Calu3 (cell line): ENCODE measurements at regions of chr5 and their contacts with region 1.

Region 1: GRCh38 chr5:31021181-31021624 is 172.3 kb upstream of the CDH6 start:
- DNase-seq: no peak
- H3K4me3 Mint-ChIP-seq: no peak overlapping the region
- H3K27ac Mint-ChIP-seq: no peak overlapping the region
- H3K4me1 Mint-ChIP-seq: peaks cover 16% of the 10 kb centered on the region
- H3K27me3 Mint-ChIP-seq: no peaks in the 10 kb centered on the region
- CTCF ChIP-seq: no peak

Region 2: DNA sequence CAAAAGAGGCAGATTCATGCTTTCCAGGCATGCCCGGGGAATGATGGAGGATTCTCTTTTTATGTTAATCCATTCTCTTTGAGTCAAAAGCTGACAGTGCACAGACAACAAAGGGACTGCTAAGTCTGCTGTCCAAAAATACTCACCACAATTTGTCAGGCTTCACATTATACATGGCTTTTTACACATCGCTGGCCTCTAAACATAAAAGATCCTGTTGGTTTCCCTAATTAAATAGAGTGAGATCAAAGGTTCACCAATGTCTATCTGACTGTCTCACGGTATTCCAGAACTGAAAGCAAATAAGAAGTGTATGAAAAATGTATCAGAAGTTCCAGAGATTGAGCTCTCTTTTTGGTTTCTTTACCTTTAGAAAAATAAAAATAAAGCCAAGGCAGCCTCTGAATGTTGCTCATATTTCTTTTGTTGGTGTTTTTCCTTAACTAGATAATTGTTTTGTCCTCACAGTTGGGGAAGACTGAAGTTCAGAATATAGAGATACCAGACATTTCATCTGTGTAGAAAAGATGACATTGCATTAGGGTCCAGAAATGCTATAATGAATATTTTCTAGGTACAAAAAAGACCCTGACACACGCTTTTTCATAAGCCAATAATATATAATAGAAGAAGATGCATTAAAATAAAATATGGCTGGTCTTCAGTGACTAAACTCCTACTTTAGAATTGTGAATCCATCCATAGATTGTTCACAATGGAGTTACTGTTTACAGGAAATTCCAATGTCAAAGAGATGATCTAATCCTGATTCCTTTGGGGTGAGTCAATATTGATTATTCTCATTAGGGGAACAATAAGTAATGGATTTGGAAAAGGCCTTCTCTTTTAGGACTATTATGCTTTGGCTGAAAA is 516.0 kb before region 1 on chr5:
- CTCF ChIA-PET with region 1: no interaction called
- intact Hi-C with region 1: loop called (anchors 5 kb)
- DNase-seq: no peak
- H3K4me3 Mint-ChIP-seq: no peak overlapping the region
- H3K27ac Mint-ChIP-seq: peak overlapping the region; percentile 85
- H3K4me1 Mint-ChIP-seq: peaks cover 56% of the 10 kb centered on the region
- H3K27me3 Mint-ChIP-seq: no peaks in the 10 kb centered on the region
- CTCF ChIP-seq: no peak

Region 3: DNA sequence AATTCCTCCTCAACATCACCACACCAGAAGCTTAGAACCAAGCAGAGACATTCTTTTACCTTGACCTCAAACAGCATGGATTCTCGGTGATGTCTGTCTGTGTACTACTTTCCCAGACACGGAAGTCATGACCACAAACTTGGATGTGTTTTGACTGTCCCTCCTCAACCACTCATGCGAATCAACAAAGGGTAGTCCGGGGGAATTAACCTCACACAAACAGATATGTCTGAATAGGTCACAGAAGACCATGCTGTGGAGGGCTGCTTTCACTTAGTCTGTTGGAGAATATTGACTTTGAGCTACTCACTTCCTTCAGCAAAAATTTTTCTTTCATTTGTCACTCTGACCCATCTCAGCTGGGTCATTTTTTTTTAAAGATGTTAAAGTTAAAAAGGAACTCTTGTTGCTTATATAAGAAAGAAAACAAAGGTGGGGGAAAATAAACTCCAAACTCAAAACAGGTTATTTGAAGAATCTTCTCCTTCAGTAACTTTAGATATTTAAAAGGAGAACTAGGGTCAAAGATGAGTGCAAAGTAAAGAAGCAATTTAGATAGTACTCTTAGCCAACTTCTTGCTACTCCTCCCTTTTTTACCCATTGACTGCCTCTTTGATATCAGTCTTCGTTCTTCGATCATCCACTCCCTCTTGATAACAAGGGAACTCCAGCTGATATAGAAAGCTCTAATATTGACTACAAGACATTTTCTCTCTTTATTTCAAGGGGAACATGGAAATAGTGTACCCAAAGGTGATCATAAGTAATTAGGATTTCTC is 171.1 kb before region 1 on chr5:
- CTCF ChIA-PET with region 1: no interaction called
- intact Hi-C with region 1: loop called (anchors 5 kb)
- DNase-seq: peak; percentile 3
- H3K4me3 Mint-ChIP-seq: no peak overlapping the region
- H3K27ac Mint-ChIP-seq: no peak overlapping the region
- H3K4me1 Mint-ChIP-seq: peaks cover 6% of the 10 kb centered on the region
- H3K27me3 Mint-ChIP-seq: no peaks in the 10 kb centered on the region
- CTCF ChIP-seq: no peak

Region 4: GRCh38 chr5:31186672-31187267 is 165.6 kb after region 1 on chr5:
- CTCF ChIA-PET with region 1: no interaction called
- intact Hi-C with region 1: loop called (anchors 5 kb)
- DNase-seq: no peak
- H3K4me3 Mint-ChIP-seq: no peak overlapping the region
- H3K27ac Mint-ChIP-seq: no peak overlapping the region
- H3K4me1 Mint-ChIP-seq: no peaks in the 10 kb centered on the region
- H3K27me3 Mint-ChIP-seq: peaks cover under 1% of the 10 kb centered on the region
- CTCF ChIP-seq: peak; percentile 72